Activated naive CD4-positive, alpha-beta T cell treated with anti-CD3 and anti-CD28 coated beads for 36 hours (primary cell): ENCODE measurements at regions of chr17 and their contacts with region 1.

Region 1: GRCh38 chr17:68035523-68036303 is at the start of gene KPNA2:
- DNase-seq: peak; percentile 94
- H3K4me3 Mint-ChIP-seq: peak within 1 kb of the TSS; percentile 94
- H3K27ac Mint-ChIP-seq: peak within 1 kb of the TSS; percentile 96
- H3K4me1 Mint-ChIP-seq: peaks cover 19% of the 10 kb centered on the region
- H3K27me3 Mint-ChIP-seq: no peaks in the 10 kb centered on the region
- total RNA-seq, gene KPNA2: 186 to 203 TPM

Region 2: DNA sequence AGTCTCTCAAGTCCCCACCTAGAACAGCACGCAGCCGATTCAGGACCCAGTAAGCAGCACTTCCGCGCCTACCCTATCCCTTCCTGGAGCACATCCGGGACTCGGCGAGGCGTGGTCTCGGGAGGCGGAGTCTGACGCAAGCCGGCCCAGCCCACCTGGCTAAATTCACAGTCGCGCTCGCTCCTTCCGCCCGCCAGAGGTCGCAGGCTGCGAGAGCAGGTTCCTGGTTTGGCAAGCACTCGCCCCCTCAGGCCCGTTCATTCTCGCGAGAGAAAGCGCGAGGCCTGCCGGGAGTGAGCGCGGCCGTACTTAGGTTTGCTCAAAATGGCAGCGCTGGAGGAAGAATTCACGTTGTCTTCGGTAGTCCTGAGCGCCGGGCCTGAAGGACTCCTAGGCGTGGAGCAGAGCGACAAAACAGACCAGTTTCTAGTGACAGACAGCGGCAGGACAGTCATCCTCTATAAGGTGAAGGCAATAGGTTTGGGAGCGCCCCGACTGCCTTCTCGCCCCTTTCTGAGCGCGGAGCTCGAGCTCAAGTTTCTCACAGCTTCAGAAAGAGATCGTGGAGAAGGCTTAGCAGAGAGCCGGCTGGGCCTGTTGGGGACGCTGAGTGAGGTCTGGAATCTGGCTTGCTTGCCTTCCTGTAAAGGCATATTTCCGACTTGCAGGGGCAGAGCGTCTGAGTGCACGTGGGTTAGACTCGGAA is 317.9 kb before region 1 on chr17 and contains the start of gene NOL11:
- CTCF ChIA-PET with region 1: no interaction called
- intact Hi-C with region 1: loop called (anchors 1 kb)
- DNase-seq: peak; percentile 100
- H3K4me3 Mint-ChIP-seq: peak within 1 kb of the TSS; percentile 100
- H3K27ac Mint-ChIP-seq: peak within 1 kb of the TSS; percentile 99
- H3K4me1 Mint-ChIP-seq: peaks cover 20% of the 10 kb centered on the region
- H3K27me3 Mint-ChIP-seq: peaks cover 3% of the 10 kb centered on the region
- total RNA-seq, gene NOL11: 49.7 to 54.1 TPM

Region 3: DNA sequence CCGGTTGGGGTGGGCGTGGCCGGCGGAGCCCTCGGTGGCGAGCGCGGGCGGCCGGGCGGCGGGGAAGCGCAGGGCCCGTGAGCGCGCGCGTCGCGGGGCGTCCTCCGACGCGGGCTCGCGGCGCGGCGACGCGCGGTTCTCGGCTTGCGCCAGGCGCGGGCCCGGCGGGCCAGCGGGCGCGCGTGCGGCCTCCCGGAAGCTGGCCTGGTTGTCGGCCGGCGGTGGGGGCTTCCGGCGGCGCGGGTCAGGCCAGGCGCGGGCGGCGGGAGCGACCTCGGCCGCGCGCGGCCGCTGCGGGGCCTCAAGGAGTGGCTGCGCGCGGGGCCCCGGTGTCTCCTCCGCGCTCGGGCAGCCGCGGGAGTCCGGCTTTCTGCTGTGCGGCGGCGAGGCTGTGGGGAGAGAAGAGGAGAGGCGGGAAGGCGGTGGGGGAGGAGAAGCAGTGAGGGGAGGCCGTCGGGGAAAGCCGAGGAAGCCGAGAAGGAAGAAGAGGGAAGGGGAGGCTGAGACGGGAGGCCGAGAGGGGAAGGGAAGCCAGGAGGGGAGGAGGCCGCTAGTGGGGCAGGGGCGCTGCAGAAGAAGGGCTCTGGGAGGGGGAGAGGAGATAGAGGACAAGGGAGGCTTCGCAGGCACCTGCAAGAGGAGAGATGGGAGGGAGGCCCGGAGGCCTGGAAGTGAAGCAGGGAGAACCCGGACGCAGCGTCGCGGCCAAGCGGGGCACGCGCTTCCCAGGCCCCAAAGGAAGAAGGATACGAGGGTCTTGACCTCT is 41.9 kb before region 1 on chr17:
- CTCF ChIA-PET with region 1: no interaction called
- intact Hi-C with region 1: loop called (anchors 1 kb)
- DNase-seq: peak; percentile 67
- H3K4me3 Mint-ChIP-seq: peak overlapping the region; percentile 78
- H3K27ac Mint-ChIP-seq: peak overlapping the region; percentile 78
- H3K4me1 Mint-ChIP-seq: peaks cover 30% of the 10 kb centered on the region
- H3K27me3 Mint-ChIP-seq: peaks cover 17% of the 10 kb centered on the region

Region 4: DNA sequence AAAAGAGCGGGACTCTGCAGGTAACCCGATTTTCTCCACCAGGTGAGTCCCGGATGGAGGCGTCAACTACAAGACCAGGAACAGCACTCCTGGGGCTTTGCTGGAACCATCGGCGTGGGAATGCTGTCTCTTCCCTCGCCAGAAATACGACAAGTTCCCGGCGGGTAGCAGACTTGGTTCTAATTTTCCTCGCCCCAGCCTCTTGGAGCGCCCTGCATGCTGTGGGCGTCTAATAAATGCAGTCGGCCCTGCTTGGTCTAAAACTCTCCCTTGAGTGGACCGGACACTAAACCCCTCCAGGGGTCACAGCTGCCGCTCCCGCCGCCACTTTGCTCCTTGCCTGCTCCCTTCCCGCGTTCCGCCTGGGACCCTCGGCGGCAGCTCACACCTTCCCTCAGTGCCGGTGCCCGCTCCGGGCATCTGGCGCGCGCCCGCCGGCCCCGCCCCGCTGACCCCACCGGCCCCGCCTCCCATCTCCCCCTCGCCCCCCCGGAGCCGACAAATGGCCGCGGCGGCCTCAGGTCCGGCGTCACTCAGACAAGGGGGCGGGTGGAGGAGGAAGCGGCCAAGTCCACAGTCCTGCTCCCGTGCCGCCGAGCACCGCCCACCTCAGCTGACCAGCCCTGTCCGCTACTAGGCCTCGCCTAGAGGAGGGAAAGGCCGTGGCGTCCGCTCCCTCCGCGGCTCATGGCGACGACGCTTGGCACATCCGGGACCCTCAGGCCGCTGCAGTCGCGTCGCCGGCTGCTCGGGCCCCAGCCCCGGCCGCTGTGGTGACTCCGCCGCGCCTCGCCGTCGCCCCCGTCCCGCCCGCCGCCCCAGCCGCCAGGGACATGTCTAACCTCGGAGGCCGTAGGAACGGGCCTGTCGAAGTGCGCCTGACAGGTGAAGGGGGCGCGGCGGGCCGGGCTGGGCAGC is 65.6 kb after region 1 on chr17:
- CTCF ChIA-PET with region 1: no interaction called
- intact Hi-C with region 1: loop called (anchors 2 kb)
- DNase-seq: peak; percentile 63
- H3K4me3 Mint-ChIP-seq: peak overlapping the region; percentile 90
- H3K27ac Mint-ChIP-seq: peak overlapping the region; percentile 48
- H3K4me1 Mint-ChIP-seq: peaks cover 25% of the 10 kb centered on the region
- H3K27me3 Mint-ChIP-seq: no peaks in the 10 kb centered on the region

Region 5: GRCh38 chr17:68512247-68512982 is 476.7 kb after region 1 on chr17 and contains the start of gene PRKAR1A:
- CTCF ChIA-PET with region 1: no interaction called
- intact Hi-C with region 1: loop called (anchors 5 kb)
- DNase-seq: peak; percentile 95
- H3K4me3 Mint-ChIP-seq: peak within 1 kb of the TSS; percentile 99
- H3K27ac Mint-ChIP-seq: peak within 1 kb of the TSS; percentile 99
- H3K4me1 Mint-ChIP-seq: peaks cover 41% of the 10 kb centered on the region
- H3K27me3 Mint-ChIP-seq: no peaks in the 10 kb centered on the region
- total RNA-seq, gene PRKAR1A: 151 TPM